BJ (cell line): ENCODE measurements at regions of chr9 and their contacts with region 1.

Region 1: GRCh38 chr9:124818431-124819281 is 34.6 kb upstream of the WDR38 start:
- DNase-seq: no peak
- H3K4me3 ChIP-seq: no peak overlapping the region
- H3K27me3 ChIP-seq: no peaks in the 10 kb centered on the region
- CTCF ChIP-seq: no peak

Region 2: DNA sequence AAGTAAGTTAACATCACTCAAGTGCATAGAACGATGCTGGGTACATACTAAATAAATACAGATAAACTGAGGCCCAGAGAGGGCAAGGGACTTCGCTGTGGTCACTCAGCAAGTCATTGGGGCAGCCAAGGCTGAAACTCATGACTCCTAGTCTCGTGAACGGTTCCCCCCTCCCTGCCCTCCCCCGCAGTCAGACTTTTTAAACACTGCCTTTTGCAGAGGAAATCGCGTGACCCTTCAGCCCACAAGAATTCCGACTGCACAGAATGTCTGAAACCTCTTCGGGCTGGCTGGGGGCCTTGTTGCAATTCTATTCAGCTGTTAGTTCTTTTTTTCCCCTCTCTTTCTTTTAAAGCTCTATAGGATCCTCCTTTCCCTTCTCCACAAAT is 532.8 kb before region 1 on chr9:
- CTCF ChIA-PET with region 1: no interaction called
- POLR2A ChIA-PET with region 1: interaction called, 15 read pairs
- DNase-seq: peak; percentile 93
- H3K4me3 ChIP-seq: no peak overlapping the region
- H3K27me3 ChIP-seq: no peaks in the 10 kb centered on the region
- CTCF ChIP-seq: no peak

Region 3: GRCh38 chr9:124708633-124709291 is 109.9 kb before region 1 on chr9:
- CTCF ChIA-PET with region 1: no interaction called
- POLR2A ChIA-PET with region 1: no interaction called
- DNase-seq: peak; percentile 70
- H3K4me3 ChIP-seq: no peak overlapping the region
- H3K27me3 ChIP-seq: no peaks in the 10 kb centered on the region
- CTCF ChIP-seq: no peak

Region 4: DNA sequence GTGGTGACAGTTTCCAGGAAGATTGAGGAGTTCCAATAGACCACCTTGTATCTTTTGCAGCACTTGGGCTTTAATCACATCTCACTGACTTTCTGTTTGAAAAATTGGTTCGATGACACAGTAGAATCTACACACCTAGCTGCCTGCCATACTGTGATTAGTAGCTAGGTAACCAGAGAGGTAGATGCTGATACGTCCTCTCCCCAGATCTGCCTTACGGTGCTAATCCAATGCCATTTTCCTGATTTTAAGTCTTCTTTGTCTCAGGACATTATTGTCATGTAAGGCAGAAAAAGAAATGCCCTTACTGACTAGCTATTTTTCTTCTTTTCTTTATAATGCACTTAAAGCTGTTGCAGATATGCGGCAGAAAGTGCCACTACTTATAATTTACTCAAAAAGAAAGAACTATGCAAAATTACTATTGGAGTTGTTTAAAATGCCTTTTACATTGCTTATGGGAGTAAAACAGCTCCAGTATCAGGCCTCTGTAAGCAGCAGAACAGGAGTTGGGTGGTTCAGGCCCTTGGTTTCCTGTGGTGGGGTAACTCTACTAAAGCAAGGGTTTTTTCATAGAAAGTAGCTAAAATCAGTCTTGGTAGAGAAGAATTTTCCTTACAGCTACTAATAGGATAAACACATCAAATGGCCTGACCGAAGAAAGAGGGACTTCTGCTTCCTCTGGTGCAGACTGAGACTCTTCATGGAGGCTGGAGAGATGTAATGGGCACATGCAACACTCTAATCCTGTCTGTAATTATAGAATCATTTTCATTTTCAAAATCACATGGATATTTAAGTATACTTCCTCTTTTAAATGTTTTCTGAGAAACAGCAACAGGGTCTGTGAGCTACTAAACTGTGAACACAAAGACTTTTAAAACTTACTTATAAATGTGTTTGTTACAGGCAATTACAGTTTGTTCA is 711.2 kb after region 1 on chr9:
- CTCF ChIA-PET with region 1: no interaction called
- POLR2A ChIA-PET with region 1: no interaction called
- DNase-seq: no peak
- H3K4me3 ChIP-seq: no peak overlapping the region
- H3K27me3 ChIP-seq: no peaks in the 10 kb centered on the region
- CTCF ChIP-seq: no peak